Activated CD4-positive, alpha-beta T cell treated with anti-CD3 and anti-CD28 coated beads for 36 hours (primary cell): ENCODE measurements at regions of chrX and their contacts with region 1.

Region 1: GRCh38 chrX:154515878-154516655 is at the start of gene FAM3A:
- DNase-seq: peak; percentile 97
- ATAC-seq: peak; percentile 98
- H3K4me3 Mint-ChIP-seq: peak within 1 kb of the TSS; percentile 81
- H3K27ac Mint-ChIP-seq: peak within 1 kb of the TSS; percentile 90
- H3K4me1 Mint-ChIP-seq: peaks cover 30% of the 10 kb centered on the region
- H3K27me3 Mint-ChIP-seq: no peaks in the 10 kb centered on the region
- total RNA-seq, gene FAM3A: 27.6 to 30.5 TPM

Region 2: DNA sequence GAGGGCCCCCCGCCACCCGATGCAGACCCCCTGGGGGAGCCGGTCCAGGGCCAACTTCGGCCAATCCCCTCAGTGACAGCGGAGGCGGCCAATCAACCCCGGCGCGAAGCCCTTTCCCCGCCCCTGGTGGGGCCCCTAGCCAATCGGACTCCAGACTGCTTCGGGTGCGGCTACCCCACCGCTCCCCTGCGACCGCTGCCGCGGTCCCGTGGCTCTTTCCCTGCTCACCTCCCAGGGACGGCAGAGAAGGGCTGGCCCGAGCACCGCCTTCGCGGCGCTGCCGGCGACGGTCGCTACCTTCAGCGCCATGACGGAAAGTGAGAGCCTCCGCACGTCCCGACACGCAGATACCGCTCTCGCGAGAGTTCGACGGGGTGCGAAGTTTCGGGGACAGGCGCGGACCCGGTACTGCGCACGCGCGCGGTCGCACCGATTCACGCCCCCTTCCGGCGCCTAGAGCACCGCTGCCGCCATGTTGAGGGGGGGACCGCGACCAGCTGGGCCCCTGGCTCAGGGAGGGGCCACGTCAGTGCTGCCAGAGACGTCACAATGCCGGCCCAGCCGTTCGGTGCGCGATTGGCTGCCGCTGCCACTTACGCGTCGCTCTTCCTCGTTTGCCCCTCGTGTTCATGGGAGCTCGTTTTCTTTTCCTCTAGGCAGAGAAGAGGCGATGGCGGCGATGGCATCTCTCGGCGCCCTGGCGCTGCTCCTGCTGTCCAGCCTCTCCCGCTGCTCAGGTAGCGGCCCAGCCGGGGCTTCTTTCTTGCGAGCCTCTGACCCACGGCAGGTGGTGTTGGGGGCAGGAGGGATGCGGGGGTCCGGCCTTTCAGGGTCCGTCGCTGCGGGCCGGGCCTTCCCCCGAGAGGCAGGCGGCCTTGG is 721.8 kb before region 1 on chrX and contains the starts of genes IDH3G and SSR4:
- CTCF ChIA-PET with region 1: no interaction called
- POLR2A ChIA-PET with region 1: no interaction called
- intact Hi-C with region 1: loop called in 1 of 2 experiments (anchors 1 kb)
- DNase-seq: peak; percentile 96
- ATAC-seq: peak; percentile 97
- H3K4me3 Mint-ChIP-seq: peak within 1 kb of the TSS; percentile 93
- H3K27ac Mint-ChIP-seq: peak within 1 kb of the TSS; percentile 93
- H3K4me1 Mint-ChIP-seq: peaks cover 21% of the 10 kb centered on the region
- H3K27me3 Mint-ChIP-seq: no peaks in the 10 kb centered on the region
- total RNA-seq, gene IDH3G: 48.8 to 62.4 TPM
- total RNA-seq, gene SSR4: 124 to 146 TPM

Region 3: DNA sequence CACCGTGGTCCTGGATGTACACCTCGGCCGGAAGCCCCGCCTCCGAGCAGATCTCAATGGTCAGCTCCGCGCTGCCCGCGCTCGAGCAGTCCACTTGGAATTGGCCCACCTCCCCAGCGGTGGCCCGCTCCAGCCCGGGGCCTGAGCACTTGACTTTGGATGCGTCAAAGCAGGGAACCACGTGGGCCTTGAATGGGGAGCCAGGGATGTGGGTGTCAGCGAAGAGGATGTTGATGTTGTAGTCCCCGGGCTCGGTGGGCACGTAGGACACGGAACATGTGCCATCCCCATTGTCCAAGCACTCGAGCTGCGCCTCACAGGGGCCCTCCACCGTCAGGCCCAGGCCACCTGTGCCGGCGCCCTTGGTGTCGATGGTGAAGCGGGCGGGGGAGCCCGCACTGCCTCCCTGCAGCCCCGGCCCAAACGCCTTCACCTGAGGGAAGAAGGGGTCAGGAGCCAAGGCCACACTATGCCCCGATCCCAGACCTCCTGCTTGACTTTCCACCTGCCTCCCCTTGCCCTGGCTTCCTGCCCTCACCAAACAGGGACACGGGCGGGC is 155.8 kb before region 1 on chrX:
- CTCF ChIA-PET with region 1: no interaction called
- POLR2A ChIA-PET with region 1: no interaction called
- intact Hi-C with region 1: no loop called
- DNase-seq: no peak
- ATAC-seq: no peak
- H3K4me3 Mint-ChIP-seq: no peak overlapping the region
- H3K27ac Mint-ChIP-seq: no peak overlapping the region
- H3K4me1 Mint-ChIP-seq: peaks cover 20% of the 10 kb centered on the region
- H3K27me3 Mint-ChIP-seq: no peaks in the 10 kb centered on the region

Region 4: DNA sequence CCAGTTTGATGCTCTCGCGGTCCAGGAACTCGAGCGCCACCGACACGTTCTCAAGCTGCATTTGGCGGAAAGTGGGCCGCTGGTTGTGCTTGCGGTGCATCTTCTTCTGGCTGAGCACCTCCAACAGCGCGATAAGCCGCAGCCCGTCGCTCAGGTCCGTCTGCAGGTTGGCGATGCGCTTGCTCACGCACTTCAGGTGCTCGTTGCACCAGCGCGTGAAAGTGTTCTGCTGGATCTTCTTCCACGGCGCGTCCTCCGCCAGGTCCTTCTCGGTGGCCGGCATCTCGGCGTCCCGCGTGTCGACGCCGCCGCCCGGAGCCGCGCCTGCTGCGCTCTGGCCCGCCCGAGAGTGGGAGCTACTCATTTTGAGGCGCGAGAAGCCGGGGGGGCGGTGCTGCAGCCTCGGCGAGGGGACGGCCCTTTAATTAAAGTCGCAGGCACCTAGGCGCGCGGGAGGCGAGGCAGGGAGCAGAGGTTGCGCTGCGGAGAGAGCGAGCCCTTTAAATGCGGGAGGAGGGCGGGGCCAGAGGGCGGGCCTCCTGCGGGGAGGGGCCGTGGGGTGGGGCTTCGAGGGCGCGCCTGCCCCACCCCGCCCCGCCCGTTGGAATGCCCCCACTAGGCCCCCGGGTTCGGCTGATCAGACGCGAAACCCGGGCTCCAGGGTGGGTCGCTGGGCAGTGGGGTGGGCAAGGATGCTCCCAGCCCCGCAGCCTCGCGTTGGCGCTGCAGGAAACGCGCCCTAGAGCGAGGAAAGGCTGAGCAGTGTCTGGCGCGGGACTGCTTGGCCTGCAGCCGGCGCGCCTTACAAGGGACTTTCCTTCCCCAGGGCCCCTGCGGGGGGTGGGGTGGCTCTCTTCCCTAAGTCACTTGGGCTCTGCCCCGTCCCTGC is 144.9 kb before region 1 on chrX:
- CTCF ChIA-PET with region 1: no interaction called
- POLR2A ChIA-PET with region 1: no interaction called
- intact Hi-C with region 1: loop called in 1 of 2 experiments (anchors 1 kb)
- DNase-seq: peak; percentile 96
- ATAC-seq: peak; percentile 55
- H3K4me3 Mint-ChIP-seq: peak overlapping the region; percentile 86
- H3K27ac Mint-ChIP-seq: peak overlapping the region; percentile 55
- H3K4me1 Mint-ChIP-seq: peaks cover 22% of the 10 kb centered on the region
- H3K27me3 Mint-ChIP-seq: no peaks in the 10 kb centered on the region

Region 5: GRCh38 chrX:154411322-154411980 is 104.6 kb before region 1 on chrX and contains the start of gene TAFAZZIN:
- CTCF ChIA-PET with region 1: interaction called, 3 read pairs
- POLR2A ChIA-PET with region 1: no interaction called
- intact Hi-C with region 1: loop called in 1 of 2 experiments (anchors 1 kb)
- DNase-seq: peak; percentile 87
- ATAC-seq: peak; percentile 73
- H3K4me3 Mint-ChIP-seq: peak within 1 kb of the TSS; percentile 86
- H3K27ac Mint-ChIP-seq: peak within 1 kb of the TSS; percentile 94
- H3K4me1 Mint-ChIP-seq: peaks cover 13% of the 10 kb centered on the region
- H3K27me3 Mint-ChIP-seq: no peaks in the 10 kb centered on the region
- total RNA-seq, gene TAFAZZIN: 43.8 to 49.0 TPM

Region 6: DNA sequence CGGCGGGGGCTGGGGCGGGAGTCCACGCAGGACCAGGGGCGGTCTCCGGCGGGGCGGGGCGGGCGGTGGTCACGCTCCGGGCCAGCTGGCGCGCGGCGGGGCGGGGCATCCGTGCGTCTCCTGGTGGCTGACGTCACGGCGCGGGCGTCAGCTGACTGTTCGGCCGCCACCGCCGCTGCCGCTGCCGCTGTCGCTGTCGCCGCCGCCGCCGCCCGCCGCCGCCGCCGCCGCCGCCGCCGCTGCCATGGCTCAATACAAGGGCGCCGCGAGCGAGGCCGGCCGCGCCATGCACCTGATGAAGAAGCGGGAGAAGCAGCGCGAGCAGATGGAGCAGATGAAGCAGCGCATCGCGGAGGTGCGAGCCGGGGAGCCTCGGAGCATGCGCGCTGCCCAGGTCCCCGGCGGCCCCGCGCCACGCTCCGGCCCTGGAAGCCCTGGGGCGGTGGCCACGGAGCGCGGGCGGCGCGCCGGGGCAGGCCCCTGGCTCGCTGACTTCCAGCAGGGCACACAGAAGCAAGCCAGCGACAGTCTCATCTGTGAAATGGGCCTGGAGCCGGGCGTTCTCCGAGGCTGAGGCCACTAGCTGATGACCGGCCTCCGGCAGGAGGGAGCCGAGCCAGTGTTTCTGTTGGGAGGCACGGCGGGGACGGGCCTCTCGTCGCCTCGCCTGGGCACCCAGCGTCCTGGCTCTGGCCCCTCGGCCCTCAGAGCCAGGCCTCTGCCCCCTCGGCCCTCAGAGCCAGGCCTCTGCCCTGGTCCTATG is 71.9 kb before region 1 on chrX and contains the start of gene FAM50A:
- CTCF ChIA-PET with region 1: no interaction called
- POLR2A ChIA-PET with region 1: no interaction called
- intact Hi-C with region 1: no loop called
- DNase-seq: peak; percentile 82
- ATAC-seq: peak; percentile 86
- H3K4me3 Mint-ChIP-seq: peak within 1 kb of the TSS; percentile 67
- H3K27ac Mint-ChIP-seq: peak within 1 kb of the TSS; percentile 24
- H3K4me1 Mint-ChIP-seq: peaks cover 22% of the 10 kb centered on the region
- H3K27me3 Mint-ChIP-seq: no peaks in the 10 kb centered on the region
- total RNA-seq, gene FAM50A: 40.9 to 50.0 TPM

Region 7: DNA sequence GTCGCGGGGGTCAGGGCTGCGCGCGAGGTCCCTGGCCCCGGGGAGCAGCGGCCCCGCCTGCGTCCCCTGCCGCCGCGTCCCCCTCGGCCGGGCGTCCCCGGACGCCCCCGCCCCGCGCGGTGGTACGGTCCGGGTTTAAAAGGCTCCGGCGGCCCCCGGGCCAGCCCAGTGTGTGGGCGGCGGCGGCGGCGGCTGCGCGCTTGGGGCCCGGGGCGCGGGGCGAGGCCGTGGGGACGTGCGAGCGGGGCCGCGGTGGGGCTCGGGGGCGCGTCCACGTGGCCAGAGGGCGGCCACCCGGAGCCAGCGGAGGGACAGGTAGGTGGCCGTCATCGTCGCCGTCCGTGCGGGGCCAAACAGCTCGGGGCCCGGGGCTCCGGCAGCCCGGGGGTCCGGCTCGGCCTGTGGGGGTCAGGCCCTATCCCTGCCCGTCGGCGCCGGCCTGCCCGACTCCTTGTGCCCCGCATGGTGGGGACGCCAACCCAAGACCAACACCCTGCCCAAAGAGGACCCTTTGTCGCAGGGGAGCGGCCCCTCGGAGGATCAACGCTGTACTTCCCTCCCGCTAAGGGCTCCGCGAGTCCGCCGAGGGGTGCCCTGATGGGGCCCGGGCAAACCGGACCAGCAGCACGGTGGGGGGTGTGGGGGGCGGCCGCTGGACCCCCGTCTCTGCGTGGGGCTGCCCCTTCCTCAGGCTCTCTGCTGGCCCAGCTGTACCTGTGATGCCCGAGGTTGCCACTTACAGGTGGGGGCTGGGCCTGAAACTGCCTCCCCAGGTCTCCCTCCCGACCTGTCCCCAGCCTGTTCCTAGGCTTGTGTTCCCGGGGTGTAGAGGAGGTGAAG is 57.7 kb before region 1 on chrX and contains the start of gene PLXNA3:
- CTCF ChIA-PET with region 1: no interaction called
- POLR2A ChIA-PET with region 1: no interaction called
- intact Hi-C with region 1: loop called in 1 of 2 experiments (anchors 1 kb)
- DNase-seq: peak; percentile 66
- ATAC-seq: peak; percentile 54
- H3K4me3 Mint-ChIP-seq: peak within 1 kb of the TSS; percentile 88
- H3K27ac Mint-ChIP-seq: peak within 1 kb of the TSS; percentile 91
- H3K4me1 Mint-ChIP-seq: peaks cover 5% of the 10 kb centered on the region
- H3K27me3 Mint-ChIP-seq: no peaks in the 10 kb centered on the region
- total RNA-seq, gene PLXNA3: 23.2 to 25.3 TPM

Region 8: DNA sequence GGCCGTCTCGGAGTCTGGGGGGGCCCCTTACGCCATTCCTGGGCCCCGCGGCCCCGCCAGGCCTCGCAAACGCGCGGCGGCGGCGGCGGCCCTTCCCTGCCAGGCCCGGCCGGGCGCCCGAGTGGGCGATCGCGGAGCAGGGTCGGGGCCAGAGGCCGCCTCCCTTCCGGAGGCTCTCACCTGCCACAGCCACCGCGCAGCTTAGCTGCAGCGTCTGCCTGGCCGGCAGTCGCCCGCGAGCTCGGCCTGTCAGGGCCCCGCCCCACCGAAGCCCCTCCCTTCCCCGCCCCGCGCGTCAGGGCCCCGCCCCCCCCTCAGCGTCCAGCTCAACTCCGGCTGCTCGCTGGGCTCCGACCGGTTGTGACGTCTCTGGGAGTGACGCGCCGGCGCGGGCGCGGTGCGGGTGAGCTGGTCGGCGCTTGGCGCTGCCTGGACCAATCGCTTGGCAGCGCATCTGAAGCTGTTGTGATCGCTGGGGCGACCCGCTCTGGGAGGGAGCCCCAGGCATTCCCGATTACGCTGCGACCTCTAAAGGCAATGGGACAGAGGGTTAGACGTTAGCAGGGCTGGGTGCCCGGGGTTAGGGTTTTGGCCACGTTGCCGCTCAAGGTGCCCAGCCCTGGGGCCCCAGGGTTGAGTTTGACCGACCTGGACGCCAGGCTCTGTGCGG is 25.5 kb before region 1 on chrX and contains the start of gene SLC10A3:
- CTCF ChIA-PET with region 1: no interaction called
- POLR2A ChIA-PET with region 1: no interaction called
- intact Hi-C with region 1: loop called in 1 of 2 experiments (anchors 1 kb)
- DNase-seq: peak; percentile 94
- ATAC-seq: peak; percentile 91
- H3K4me3 Mint-ChIP-seq: peak within 1 kb of the TSS; percentile 85
- H3K27ac Mint-ChIP-seq: peak within 1 kb of the TSS; percentile 89
- H3K4me1 Mint-ChIP-seq: peaks cover 17% of the 10 kb centered on the region
- H3K27me3 Mint-ChIP-seq: no peaks in the 10 kb centered on the region
- total RNA-seq, gene SLC10A3: 10.4 to 11.3 TPM

Region 9: GRCh38 chrX:154547245-154548027 is 31.4 kb after region 1 on chrX and contains the start of gene IKBKG:
- CTCF ChIA-PET with region 1: no interaction called
- POLR2A ChIA-PET with region 1: interaction called, 4 read pairs
- intact Hi-C with region 1: loop called (anchors 1 to 2 kb)
- DNase-seq: peak; percentile 92
- ATAC-seq: peak; percentile 81
- H3K4me3 Mint-ChIP-seq: peak within 1 kb of the TSS; percentile 99
- H3K27ac Mint-ChIP-seq: peak within 1 kb of the TSS; percentile 97
- H3K4me1 Mint-ChIP-seq: peaks cover 39% of the 10 kb centered on the region
- H3K27me3 Mint-ChIP-seq: no peaks in the 10 kb centered on the region
- total RNA-seq, gene IKBKG: 32.7 to 33.0 TPM